Activated CD4-positive, alpha-beta memory T cell treated with anti-CD3 and anti-CD28 coated beads, Interleukin-2, amount 10 ng/mL, durations not matched to agents 7 days and 5 days (primary cell): ENCODE measurements at regions of chr2 and their contacts with region 1.

Region 1: DNA sequence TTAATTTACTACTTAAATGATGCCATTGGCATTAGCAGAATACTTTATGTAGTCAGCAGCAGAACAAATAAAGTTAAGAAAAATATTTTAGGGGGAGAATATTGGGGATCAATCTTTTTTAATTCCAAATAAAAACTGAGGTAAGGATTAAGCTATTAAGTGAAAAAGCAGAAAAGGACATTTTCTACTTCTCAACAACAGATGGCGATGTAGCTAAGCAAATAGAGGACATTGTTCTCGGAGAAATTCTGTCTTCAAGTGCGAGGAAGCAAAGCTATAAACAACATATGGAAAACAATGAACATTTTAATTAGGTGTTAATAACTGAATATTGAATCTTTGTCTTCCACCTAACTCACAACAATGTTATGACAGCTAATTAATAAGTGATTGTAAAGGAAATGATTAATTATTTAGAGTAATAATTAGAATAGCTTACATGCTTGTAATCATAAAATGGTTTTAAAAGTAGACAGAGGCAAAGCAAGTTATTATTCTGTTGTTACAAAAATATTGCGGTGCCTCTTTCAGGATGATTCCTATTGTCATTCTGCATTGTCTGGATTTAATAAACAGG is 32.9 kb upstream of the CCDC93 start:
- DNase-seq: no peak
- H3K4me3 Mint-ChIP-seq: no peak overlapping the region
- H3K27ac Mint-ChIP-seq: no peak overlapping the region
- H3K4me1 Mint-ChIP-seq: peaks cover 27% of the 10 kb centered on the region
- H3K27me3 Mint-ChIP-seq: peaks cover 32% of the 10 kb centered on the region

Region 2: DNA sequence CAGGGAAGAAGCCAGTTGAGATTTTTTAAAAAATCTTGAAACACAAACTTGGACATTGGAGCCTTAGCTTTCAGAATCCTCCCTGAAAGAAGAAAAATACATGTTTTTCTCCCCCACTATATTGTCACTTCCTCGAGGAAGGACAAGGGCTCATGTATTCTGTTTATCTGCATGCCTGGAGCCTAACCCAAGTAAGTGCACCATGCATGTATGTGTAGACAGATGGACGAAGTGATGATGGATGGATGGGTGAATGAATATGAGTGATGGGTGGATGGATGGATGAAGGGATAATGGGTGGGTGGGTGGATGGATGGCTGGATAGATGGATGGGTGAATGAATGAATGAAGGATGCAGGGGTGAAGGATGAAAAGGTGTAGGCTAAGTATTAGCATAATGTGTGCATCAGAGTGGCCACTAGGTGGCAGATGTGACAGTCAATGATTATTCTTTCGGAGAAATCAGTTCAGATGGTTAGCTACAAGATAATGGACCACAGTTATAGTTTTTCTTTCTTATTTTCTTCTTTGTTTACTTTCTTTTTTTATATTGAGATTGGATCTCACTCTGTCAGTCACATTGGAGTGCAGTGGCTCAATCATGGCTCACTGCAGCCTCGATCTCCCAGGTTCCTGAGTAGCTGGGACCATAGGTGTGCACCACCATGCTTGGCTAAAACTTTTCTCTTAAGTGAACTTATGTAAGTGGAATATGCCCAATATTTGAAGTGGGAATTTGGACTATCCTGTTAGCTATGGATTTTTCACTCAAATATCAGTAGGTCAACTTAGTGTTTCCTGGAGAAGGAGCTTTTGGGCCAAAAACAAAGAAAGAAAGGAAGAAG is 14.3 kb before region 1 on chr2:
- CTCF ChIA-PET with region 1: interaction called, 23 read pairs
- POLR2A ChIA-PET with region 1: interaction called, 3 read pairs
- DNase-seq: peak; percentile 44
- H3K4me3 Mint-ChIP-seq: no peak overlapping the region
- H3K27ac Mint-ChIP-seq: no peak overlapping the region
- H3K4me1 Mint-ChIP-seq: no peaks in the 10 kb centered on the region
- H3K27me3 Mint-ChIP-seq: peaks cover 55% of the 10 kb centered on the region

Region 3: DNA sequence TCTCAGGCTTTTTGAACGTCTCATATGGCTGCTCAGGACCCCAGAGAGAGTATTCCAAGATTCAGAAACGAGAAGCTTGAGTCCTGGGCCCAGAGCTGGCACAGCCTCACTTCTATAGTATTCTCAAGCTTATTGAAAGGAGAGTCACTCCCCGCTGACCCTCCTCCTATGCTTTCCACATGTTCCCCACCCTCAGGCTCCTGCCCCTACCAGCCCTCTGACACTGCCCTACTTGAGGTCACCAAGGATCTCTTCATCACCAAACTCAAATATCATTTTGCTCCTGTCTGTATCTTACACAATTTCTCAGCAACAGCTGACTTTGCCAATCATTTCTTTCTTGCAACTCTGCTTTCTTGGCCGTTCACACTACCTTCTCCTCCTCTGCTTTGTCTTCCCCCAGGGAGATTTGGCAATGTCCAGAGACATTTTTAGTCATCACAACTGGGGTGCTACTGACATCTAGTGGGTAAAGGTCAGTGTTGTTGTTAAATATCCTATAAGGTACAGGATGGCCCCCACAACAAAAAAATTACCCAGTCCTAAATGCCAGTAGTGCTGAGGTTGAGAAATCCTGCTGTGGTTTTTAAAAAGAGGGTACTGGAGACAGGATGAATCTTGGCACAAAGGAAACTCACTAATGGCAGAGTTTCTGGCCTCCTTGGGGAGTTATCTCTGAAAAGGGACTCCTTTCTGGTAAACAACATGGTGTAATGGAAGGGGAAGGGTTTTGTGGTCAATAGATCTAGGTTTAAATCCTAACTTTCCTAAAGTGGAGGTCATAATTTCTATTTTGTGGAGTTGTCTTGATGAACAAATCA is 14.6 kb after region 1 on chr2:
- CTCF ChIA-PET with region 1: interaction called, 53 read pairs
- POLR2A ChIA-PET with region 1: no interaction called
- DNase-seq: no peak
- H3K4me3 Mint-ChIP-seq: no peak overlapping the region
- H3K27ac Mint-ChIP-seq: no peak overlapping the region
- H3K4me1 Mint-ChIP-seq: peaks cover 10% of the 10 kb centered on the region
- H3K27me3 Mint-ChIP-seq: peaks cover 22% of the 10 kb centered on the region

Region 4: DNA sequence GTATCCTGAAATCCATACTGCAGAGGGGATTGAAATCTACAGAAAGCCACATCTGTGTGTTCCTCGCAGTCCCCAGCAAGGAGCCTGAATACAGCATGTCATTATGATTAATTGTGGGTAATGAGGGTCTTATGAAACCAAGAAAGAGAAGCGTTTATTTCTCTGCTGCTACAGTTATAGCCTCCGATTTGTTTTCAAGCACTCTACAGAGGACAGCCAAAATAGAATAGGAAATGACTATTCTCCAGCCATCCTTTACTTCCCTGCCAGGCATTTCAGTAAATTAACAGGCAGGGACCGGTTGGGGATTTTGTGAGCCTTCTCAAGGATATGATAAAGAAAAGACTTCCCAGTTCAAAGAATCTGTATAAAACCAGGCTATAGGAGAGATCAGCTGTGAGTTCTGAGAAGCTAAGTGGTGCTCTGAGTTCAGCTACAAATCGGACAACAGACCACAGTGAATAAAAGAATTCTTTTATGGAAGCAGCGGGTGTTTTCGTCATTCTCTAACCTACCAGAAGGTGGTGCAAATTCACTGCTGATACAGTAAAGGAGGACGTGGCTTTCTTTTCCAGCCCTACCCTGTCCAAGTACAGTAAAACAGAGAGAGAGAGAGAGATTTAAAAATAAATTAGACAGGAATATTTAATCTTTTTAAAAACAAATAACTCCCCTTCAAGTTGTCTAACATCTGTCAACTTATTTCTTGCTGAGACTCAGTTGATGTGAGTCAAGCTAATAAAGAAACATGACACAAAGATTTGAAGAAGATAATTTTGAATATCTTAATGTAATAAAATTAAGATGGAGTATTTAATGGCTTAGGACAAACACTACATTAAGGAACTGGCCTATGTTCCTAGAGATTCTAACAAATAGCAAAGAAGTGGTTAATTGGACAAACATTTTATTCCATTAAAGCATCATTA is 175.2 kb after region 1 on chr2:
- CTCF ChIA-PET with region 1: interaction called, 15 read pairs
- POLR2A ChIA-PET with region 1: no interaction called
- DNase-seq: peak; percentile 34
- H3K4me3 Mint-ChIP-seq: no peak overlapping the region
- H3K27ac Mint-ChIP-seq: no peak overlapping the region
- H3K4me1 Mint-ChIP-seq: peaks cover 22% of the 10 kb centered on the region
- H3K27me3 Mint-ChIP-seq: peaks cover 70% of the 10 kb centered on the region